Activated CD4-positive, alpha-beta memory T cell treated with anti-CD3 and anti-CD28 coated beads, Interleukin-2, amount 10 ng/mL, durations not matched to agents 7 days and 5 days (primary cell): ENCODE measurements at regions of chr9 and their contacts with region 1.

Region 1: GRCh38 chr9:113578882-113579282 is 115.4 kb downstream of the RGS3 start:
- DNase-seq: peak; percentile 94
- H3K4me3 Mint-ChIP-seq: peak overlapping the region; percentile 67
- H3K27ac Mint-ChIP-seq: peak overlapping the region; percentile 98
- H3K4me1 Mint-ChIP-seq: peaks cover 72% of the 10 kb centered on the region
- H3K27me3 Mint-ChIP-seq: no peaks in the 10 kb centered on the region

Region 2: DNA sequence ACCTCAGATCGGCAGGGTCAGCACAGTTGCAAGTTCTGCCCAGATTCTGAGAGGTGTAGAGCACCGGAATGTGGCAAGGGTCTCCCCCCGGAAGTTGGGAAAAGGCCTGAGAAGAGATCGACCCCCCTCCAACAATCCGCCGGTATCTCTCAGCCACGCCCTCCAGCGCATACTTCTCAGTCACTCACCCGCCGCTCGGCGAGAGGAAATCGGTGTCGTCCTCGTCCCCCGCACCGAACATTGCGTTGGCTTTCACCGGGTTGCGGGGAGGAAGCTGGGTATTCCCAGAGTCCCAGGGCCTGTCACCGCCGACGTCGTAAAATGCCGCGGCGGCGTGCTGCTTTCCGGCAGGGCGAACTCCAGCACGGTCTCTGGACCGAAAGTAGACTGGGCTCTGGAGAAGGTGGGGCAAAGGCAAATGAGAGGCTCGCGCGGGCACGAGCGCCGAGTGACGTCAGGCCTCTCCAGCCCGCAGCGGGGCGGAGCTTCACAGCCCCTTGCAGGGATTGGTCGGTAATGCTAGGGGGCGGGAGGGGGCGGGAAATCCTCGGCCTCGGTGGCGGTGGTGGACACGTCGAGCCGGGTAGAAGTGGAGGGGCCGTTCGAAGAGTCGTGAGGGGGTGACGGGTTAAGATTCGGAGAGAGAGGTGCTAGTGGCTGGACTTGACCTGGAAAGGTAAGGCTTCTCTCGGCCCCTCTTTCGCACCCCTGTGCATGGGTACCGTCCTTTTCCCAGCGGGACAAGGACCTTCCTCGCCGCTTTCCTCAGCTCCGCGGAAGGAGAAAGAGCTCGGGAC is 357.7 kb before region 1 on chr9 and contains the starts of genes FKBP15 and SLC31A1:
- CTCF ChIA-PET with region 1: no interaction called
- POLR2A ChIA-PET with region 1: interaction called, 15 read pairs
- DNase-seq: peak; percentile 97
- H3K4me3 Mint-ChIP-seq: peak within 1 kb of the TSS; percentile 92
- H3K27ac Mint-ChIP-seq: peak within 1 kb of the TSS; percentile 85
- H3K4me1 Mint-ChIP-seq: peaks cover 46% of the 10 kb centered on the region
- H3K27me3 Mint-ChIP-seq: no peaks in the 10 kb centered on the region
- total RNA-seq, gene FKBP15: 34.9 to 38.2 TPM
- total RNA-seq, gene SLC31A1: 9.2 to 10.0 TPM

Region 3: DNA sequence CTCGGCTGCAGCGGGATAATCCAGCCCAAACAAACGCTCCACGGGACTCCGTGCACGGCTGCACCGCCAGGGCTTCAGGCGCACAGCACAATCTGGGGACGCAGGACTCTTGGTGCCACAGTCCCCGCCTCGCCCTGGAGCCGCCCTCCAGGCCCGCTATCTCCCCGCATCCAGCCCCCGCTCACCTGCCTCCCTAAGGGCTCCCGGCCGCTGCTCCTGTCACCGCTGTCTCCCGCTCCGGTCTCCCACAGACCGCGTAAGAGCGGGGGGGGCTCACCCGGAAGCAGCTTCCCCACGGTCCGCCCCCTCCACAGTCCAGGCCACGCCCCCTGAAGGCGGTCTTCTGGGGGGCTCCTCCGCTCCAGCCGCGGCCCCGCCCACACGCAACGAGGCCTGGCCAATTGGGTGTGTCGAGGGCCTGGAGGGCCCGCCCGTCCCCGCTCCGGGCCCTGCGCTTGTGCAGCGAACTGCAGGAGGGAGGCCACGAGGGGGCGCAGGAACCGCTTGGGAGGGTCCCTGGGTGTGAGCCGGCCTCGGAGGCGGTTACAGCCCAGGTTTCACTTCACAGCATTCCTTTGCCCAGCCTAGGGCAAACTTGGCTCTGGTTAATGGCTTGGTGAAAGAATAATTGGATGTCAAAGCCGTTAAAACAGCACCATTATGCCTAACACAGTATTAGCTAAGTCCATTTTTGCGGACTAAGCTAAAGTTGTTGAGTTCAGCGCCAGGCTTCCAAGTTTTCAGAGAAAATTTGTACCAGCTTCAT is 177.7 kb before region 1 on chr9 and contains the start of gene ALAD:
- CTCF ChIA-PET with region 1: interaction called, 28 read pairs
- POLR2A ChIA-PET with region 1: interaction called, 6 read pairs
- DNase-seq: peak; percentile 99
- H3K4me3 Mint-ChIP-seq: peak within 1 kb of the TSS; percentile 92
- H3K27ac Mint-ChIP-seq: peak within 1 kb of the TSS; percentile 78
- H3K4me1 Mint-ChIP-seq: peaks cover 23% of the 10 kb centered on the region
- H3K27me3 Mint-ChIP-seq: no peaks in the 10 kb centered on the region
- total RNA-seq, gene ALAD: 25.1 to 29.0 TPM

Region 4: DNA sequence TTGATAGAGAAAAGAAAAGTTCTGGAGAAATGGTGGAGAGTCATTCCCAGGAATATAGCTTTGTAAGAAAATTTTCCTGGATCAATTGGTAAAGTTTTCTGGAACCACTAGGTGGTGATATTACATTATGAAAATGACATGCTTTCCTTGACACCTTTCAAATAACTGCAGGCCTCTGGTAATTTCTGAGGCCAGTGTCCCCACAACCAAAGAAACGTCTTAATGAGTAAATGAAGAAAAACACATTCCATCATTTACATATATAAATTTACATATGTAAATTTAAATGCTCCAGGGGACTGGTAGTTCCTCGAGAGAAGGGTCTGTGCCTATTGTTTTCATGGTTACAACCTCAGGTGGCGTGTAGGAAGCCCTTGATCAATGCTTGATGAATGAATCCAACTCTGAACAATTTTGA is 132.6 kb before region 1 on chr9:
- CTCF ChIA-PET with region 1: interaction called, 16 read pairs
- POLR2A ChIA-PET with region 1: no interaction called
- DNase-seq: no peak
- H3K4me3 Mint-ChIP-seq: no peak overlapping the region
- H3K27ac Mint-ChIP-seq: no peak overlapping the region
- H3K4me1 Mint-ChIP-seq: no peaks in the 10 kb centered on the region
- H3K27me3 Mint-ChIP-seq: no peaks in the 10 kb centered on the region

Region 5: GRCh38 chr9:113511856-113512761 is 66.8 kb before region 1 on chr9:
- CTCF ChIA-PET with region 1: interaction called, 26 read pairs
- POLR2A ChIA-PET with region 1: interaction called, 59 read pairs
- DNase-seq: peak; percentile 79
- H3K4me3 Mint-ChIP-seq: peak overlapping the region; percentile 23
- H3K27ac Mint-ChIP-seq: peak overlapping the region; percentile 86
- H3K4me1 Mint-ChIP-seq: peaks cover 46% of the 10 kb centered on the region
- H3K27me3 Mint-ChIP-seq: peaks cover 3% of the 10 kb centered on the region

Region 6: GRCh38 chr9:113591001-113591898 is 12.4 kb after region 1 on chr9:
- CTCF ChIA-PET with region 1: interaction called, 33 read pairs
- POLR2A ChIA-PET with region 1: interaction called, 15 read pairs
- DNase-seq: peak; percentile 71
- H3K4me3 Mint-ChIP-seq: no peak overlapping the region
- H3K27ac Mint-ChIP-seq: no peak overlapping the region
- H3K4me1 Mint-ChIP-seq: peaks cover 48% of the 10 kb centered on the region
- H3K27me3 Mint-ChIP-seq: no peaks in the 10 kb centered on the region

Region 7: GRCh38 chr9:113622600-113623400 is 43.9 kb after region 1 on chr9:
- CTCF ChIA-PET with region 1: no interaction called
- POLR2A ChIA-PET with region 1: no interaction called
- DNase-seq: peak; percentile 48
- H3K4me3 Mint-ChIP-seq: no peak overlapping the region
- H3K27ac Mint-ChIP-seq: peak overlapping the region; percentile 67
- H3K4me1 Mint-ChIP-seq: peaks cover 27% of the 10 kb centered on the region
- H3K27me3 Mint-ChIP-seq: no peaks in the 10 kb centered on the region

Region 8: GRCh38 chr9:113675475-113675941 is 96.6 kb after region 1 on chr9:
- CTCF ChIA-PET with region 1: no interaction called
- POLR2A ChIA-PET with region 1: no interaction called
- DNase-seq: no peak
- H3K4me3 Mint-ChIP-seq: no peak overlapping the region
- H3K27ac Mint-ChIP-seq: no peak overlapping the region
- H3K4me1 Mint-ChIP-seq: peaks cover 3% of the 10 kb centered on the region
- H3K27me3 Mint-ChIP-seq: peaks cover 23% of the 10 kb centered on the region